GM12878 (cell line): ENCODE measurements at regions of chr13 and their contacts with region 1.

Region 1: DNA sequence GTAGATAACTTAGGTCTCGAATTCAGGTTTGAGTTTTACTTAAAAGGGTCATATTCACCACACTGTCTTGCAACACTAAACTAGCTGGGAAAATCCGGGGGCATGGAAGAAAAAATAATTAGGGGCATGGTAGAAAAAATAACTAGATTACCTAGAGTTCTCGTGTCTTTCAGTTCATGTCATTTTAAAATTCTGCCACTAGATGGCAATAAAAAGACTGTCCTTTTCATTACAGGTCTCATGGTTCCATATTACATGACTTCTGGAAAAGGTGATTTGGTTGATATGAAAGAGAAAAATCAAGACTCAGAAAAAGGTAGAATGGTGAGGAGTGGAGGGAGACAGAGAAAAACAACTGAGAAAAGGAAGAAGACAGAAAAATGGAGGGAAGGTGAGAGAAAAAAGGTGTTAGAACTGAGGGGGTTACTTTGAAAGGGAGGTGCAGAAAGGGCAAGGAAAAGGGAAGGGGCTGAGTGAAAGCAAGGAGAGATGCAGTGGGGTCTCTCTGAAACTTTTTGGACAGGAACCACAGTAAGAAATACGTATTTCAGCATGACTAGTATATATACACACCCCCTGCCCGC is 299.0 kb downstream of the KLF12 start:
- DNase-seq: peak; percentile 30
- ATAC-seq: peak; percentile 82
- H3K4me3 ChIP-seq: no peak overlapping the region
- H3K27ac ChIP-seq: no peak overlapping the region
- H3K4me1 ChIP-seq: no peaks in the 10 kb centered on the region
- H3K27me3 ChIP-seq: no peaks in the 10 kb centered on the region
- CTCF ChIP-seq: peak; percentile 55 to 58 (median 55); a peak in 5 of 6 replicates
- EP300 ChIP-seq: no peak
- POLR2A ChIP-seq: no peak
- RAD21 ChIP-seq: peak; percentile 74

Region 2: GRCh38 chr13:73702419-73703071 is 132.7 kb before region 1 on chr13:
- CTCF ChIA-PET with region 1: no interaction called
- POLR2A ChIA-PET with region 1: no interaction called
- RAD21 ChIA-PET with region 1: no interaction called
- SMC1A ChIA-PET with region 1: no interaction called
- in situ Hi-C with region 1: no loop called
- intact Hi-C with region 1: no loop called
- DNase-seq: peak; percentile 21
- ATAC-seq: peak; percentile 94
- H3K4me3 ChIP-seq: no peak overlapping the region
- H3K27ac ChIP-seq: no peak overlapping the region
- H3K4me1 ChIP-seq: peaks cover 9% of the 10 kb centered on the region
- H3K27me3 ChIP-seq: no peaks in the 10 kb centered on the region
- CTCF ChIP-seq: no peak
- EP300 ChIP-seq: no peak
- POLR2A ChIP-seq: no peak
- RAD21 ChIP-seq: no peak

Region 3: GRCh38 chr13:73849292-73849691 is 14.1 kb after region 1 on chr13:
- CTCF ChIA-PET with region 1: interaction called, 22 read pairs
- POLR2A ChIA-PET with region 1: interaction called, 5 read pairs
- RAD21 ChIA-PET with region 1: interaction called, 4 read pairs
- SMC1A ChIA-PET with region 1: interaction called, 4 read pairs
- in situ Hi-C with region 1: no loop called
- intact Hi-C with region 1: no loop called
- DNase-seq: no peak
- ATAC-seq: peak; percentile 50; the same call in 2 of the 3 replicates
- H3K4me3 ChIP-seq: no peak overlapping the region
- H3K27ac ChIP-seq: no peak overlapping the region
- H3K4me1 ChIP-seq: no peaks in the 10 kb centered on the region
- H3K27me3 ChIP-seq: no peaks in the 10 kb centered on the region
- CTCF ChIP-seq: peak; percentile 25 to 40 (median 29); a peak in 4 of 6 replicates
- EP300 ChIP-seq: no peak
- POLR2A ChIP-seq: no peak
- RAD21 ChIP-seq: peak; percentile 46

Region 4: DNA sequence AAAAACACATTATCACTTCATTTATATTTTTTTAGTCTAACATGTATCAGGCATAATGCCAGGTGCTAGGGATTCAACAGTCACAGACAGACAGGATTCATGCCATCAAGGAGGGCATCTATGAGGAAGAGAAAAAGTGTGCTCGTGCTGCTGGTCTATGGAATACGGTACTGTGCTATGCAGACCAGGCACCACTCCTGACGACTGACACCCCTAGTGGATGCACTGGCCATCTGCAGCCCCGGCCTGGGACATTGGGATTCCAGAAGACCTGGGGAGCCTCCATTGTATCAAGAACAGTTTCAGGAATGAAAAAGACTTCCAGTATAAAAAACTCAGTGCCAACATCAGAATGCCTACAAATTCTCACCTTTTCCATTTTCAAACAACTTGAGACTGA is 205.0 kb after region 1 on chr13:
- CTCF ChIA-PET with region 1: interaction called, 21 read pairs
- POLR2A ChIA-PET with region 1: no interaction called
- RAD21 ChIA-PET with region 1: interaction called, 12 read pairs
- SMC1A ChIA-PET with region 1: interaction called, 11 read pairs
- in situ Hi-C with region 1: no loop called
- intact Hi-C with region 1: loop called (anchors 1 kb)
- DNase-seq: no peak
- ATAC-seq: peak; percentile 100
- H3K4me3 ChIP-seq: no peak overlapping the region
- H3K27ac ChIP-seq: no peak overlapping the region
- H3K4me1 ChIP-seq: no peaks in the 10 kb centered on the region; the same call in 1 of the 2 replicates
- H3K27me3 ChIP-seq: no peaks in the 10 kb centered on the region
- CTCF ChIP-seq: peak; percentile 82 to 88 (median 87)
- EP300 ChIP-seq: no peak
- POLR2A ChIP-seq: no peak
- RAD21 ChIP-seq: peak; percentile 75

Region 5: GRCh38 chr13:74287724-74288169 is 452.5 kb after region 1 on chr13:
- CTCF ChIA-PET with region 1: interaction called, 102 read pairs
- POLR2A ChIA-PET with region 1: no interaction called
- RAD21 ChIA-PET with region 1: interaction called, 41 read pairs
- SMC1A ChIA-PET with region 1: interaction called, 52 read pairs
- in situ Hi-C with region 1: loop called (anchors 5 kb)
- intact Hi-C with region 1: loop called (anchors 1 kb)
- DNase-seq: no peak
- ATAC-seq: peak; percentile 55
- H3K4me3 ChIP-seq: no peak overlapping the region
- H3K27ac ChIP-seq: no peak overlapping the region
- H3K4me1 ChIP-seq: no peaks in the 10 kb centered on the region
- H3K27me3 ChIP-seq: peaks cover 2 to 5% of the 10 kb centered on the region in 2 experiments; a peak in 1 of 4 replicates
- CTCF ChIP-seq: no peak
- EP300 ChIP-seq: no peak
- POLR2A ChIP-seq: no peak
- RAD21 ChIP-seq: no peak

Region 6: GRCh38 chr13:74511523-74511922 is 676.3 kb after region 1 on chr13:
- CTCF ChIA-PET with region 1: no interaction called
- POLR2A ChIA-PET with region 1: no interaction called
- RAD21 ChIA-PET with region 1: no interaction called
- SMC1A ChIA-PET with region 1: no interaction called
- in situ Hi-C with region 1: no loop called
- intact Hi-C with region 1: no loop called
- DNase-seq: no peak
- ATAC-seq: no peak
- H3K4me3 ChIP-seq: no peak overlapping the region
- H3K27ac ChIP-seq: no peak overlapping the region
- H3K4me1 ChIP-seq: no peaks in the 10 kb centered on the region
- H3K27me3 ChIP-seq: no peaks in the 10 kb centered on the region
- CTCF ChIP-seq: no peak
- EP300 ChIP-seq: no peak
- POLR2A ChIP-seq: no peak
- RAD21 ChIP-seq: no peak